Activated CD4-positive, alpha-beta memory T cell treated with anti-CD3 and anti-CD28 coated beads for 36 hours (primary cell): ENCODE measurements at regions of chr10 and their contacts with region 1.

Region 1: DNA sequence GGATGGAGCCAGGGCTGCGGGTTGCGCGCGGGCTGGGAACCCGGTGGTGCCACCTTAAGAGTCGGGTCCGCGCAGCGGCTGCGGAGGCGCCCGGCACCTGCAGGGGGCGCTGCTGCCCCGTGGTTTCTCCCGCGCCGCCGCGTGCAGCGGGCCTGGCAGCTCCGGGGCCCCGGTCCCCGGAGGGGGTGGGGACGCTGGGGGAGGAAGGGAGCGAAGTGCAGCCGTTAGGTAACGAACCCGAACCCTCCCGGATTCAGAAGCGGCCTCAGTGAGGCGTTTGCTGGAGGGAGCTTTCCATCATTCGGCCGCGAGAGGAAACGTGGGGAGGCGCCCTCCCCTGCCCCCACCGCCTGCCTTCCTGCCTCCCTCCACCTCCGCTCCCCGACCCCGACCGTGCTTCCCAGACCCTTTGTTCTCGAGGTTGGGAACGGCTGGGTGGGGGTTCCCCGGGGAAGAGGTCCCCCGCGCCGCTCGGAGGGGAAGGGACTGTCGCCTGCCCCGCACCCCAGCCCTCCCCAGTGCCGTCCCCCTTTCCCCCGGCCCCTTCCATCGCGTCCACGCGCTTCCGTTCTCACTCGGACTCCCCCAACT is 29.6 kb downstream of the SKIDA1 start:
- DNase-seq: peak; percentile 90
- H3K4me3 Mint-ChIP-seq: peak overlapping the region; percentile 71
- H3K27ac Mint-ChIP-seq: no peak overlapping the region
- H3K4me1 Mint-ChIP-seq: peaks cover 12% of the 10 kb centered on the region
- H3K27me3 Mint-ChIP-seq: peaks cover 48% of the 10 kb centered on the region

Region 2: DNA sequence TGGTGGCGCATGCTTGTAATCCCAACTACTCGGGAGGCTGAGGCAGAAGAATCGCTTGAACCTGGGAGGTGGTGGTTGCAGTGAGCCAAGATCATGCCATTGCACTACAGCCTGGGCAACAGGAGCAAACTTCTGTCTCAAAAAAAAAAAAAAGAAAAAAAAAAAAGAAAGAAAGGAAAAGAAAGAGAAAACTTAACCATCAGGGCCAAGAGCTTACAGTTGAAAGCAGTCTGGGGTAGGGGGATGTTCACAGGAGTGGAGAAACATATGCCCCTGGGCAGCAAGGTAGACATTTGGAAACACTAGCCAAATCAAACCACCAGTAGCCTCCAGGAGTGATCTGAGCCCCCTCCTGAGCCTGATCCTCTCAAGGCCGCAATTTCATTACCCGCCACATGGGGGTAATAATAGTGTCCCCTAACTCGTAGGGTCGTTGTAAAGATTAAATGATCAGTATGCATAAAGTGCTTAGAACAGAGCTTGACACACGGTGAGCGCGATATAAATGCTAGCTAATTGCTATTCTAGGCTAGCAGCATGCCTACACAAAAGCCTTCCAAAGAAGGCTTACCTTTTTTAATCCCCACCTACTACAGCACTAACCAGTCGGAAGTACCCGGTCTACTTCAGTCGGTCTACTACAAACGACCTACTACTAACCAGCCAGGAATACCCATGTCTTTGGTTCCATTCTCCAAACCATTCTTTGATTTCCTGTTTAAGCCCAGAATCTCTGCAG is 324.5 kb before region 1 on chr10:
- CTCF ChIA-PET with region 1: no interaction called
- POLR2A ChIA-PET with region 1: no interaction called
- intact Hi-C with region 1: no loop called
- DNase-seq: no peak
- H3K4me3 Mint-ChIP-seq: no peak overlapping the region
- H3K27ac Mint-ChIP-seq: no peak overlapping the region
- H3K4me1 Mint-ChIP-seq: peaks cover 2% of the 10 kb centered on the region
- H3K27me3 Mint-ChIP-seq: peaks cover 31% of the 10 kb centered on the region

Region 3: DNA sequence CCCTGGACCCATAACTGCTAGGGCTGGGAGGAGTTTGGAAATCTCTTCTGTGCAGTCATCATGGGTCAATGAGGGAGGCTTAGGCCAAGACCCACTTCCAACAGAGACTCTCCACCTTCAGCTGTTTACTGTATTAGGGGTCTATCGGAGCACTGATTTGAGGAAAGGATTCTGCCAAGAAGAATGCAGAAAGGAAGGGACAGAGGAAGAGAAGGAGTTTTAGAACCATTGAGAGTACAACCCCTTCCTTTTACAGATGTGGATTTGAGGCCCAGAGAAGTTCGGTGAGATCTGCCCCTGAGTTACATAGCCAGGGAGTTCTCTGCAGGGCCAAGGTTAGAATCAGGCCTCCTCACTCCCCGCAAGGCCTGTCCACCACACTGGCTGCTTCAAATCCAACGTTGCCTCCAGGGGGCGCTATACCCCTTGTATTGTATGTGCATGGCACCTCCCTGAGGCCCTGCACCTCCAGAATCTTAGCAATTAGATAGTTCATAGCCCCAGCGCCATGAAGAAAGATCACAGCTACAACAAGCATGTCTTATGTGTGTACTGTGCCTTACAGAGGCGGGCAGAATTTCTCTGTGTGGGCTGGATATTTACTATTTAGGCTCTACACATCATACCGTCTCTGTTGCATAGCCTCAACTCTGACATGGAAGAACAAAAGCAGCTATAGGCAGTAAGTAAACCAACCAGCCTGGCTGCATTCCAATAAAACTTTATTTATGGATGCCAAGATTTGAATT is 217.2 kb before region 1 on chr10:
- CTCF ChIA-PET with region 1: interaction called, 3 read pairs
- POLR2A ChIA-PET with region 1: interaction called, 3 read pairs
- intact Hi-C with region 1: loop called (anchors 1 kb)
- DNase-seq: peak; percentile 85
- H3K4me3 Mint-ChIP-seq: no peak overlapping the region
- H3K27ac Mint-ChIP-seq: no peak overlapping the region
- H3K4me1 Mint-ChIP-seq: no peaks in the 10 kb centered on the region
- H3K27me3 Mint-ChIP-seq: peaks cover 6% of the 10 kb centered on the region

Region 4: DNA sequence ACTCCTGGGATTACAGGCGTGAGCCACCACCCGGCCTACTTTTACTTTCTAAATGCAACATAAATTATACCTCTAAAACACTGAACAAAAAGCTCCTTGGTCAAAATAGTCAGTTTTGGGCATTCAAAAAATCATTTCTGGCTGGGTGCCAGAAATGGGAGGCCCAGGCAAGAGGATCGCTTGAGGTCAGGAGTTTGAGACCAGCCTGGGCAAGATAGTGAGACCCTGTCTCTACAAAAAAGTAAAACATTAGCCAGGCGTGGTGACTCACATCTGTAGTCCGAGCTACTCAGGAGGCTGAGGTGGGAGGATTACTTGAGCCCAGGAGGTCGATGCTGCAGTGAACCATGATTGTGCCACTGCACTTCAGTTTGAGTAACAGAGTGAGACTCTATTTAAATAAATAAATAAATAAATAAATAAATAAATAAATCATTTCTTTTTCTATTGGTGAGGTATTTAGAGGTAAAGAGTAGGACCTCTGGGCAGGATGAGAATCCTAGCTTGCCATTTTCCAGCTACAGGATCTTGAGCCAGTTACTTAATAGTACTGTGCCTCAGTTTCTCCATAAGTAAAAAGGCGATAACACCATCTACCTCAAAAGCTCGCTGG is 58.0 kb before region 1 on chr10:
- CTCF ChIA-PET with region 1: no interaction called
- POLR2A ChIA-PET with region 1: no interaction called
- intact Hi-C with region 1: no loop called
- DNase-seq: no peak
- H3K4me3 Mint-ChIP-seq: no peak overlapping the region
- H3K27ac Mint-ChIP-seq: no peak overlapping the region
- H3K4me1 Mint-ChIP-seq: no peaks in the 10 kb centered on the region
- H3K27me3 Mint-ChIP-seq: peaks cover 5% of the 10 kb centered on the region

Region 5: GRCh38 chr10:21525367-21526183 is 29.7 kb after region 1 on chr10 and contains the start of gene SKIDA1:
- CTCF ChIA-PET with region 1: interaction called, 10 read pairs
- POLR2A ChIA-PET with region 1: interaction called, 7 read pairs
- intact Hi-C with region 1: no loop called
- DNase-seq: peak; percentile 79
- H3K4me3 Mint-ChIP-seq: peak within 1 kb of the TSS; percentile 80
- H3K27ac Mint-ChIP-seq: peak within 1 kb of the TSS; percentile 90
- H3K4me1 Mint-ChIP-seq: peaks cover 30% of the 10 kb centered on the region
- H3K27me3 Mint-ChIP-seq: peaks cover 13% of the 10 kb centered on the region
- total RNA-seq, gene SKIDA1: 0.07 to 0.21 TPM

Region 6: DNA sequence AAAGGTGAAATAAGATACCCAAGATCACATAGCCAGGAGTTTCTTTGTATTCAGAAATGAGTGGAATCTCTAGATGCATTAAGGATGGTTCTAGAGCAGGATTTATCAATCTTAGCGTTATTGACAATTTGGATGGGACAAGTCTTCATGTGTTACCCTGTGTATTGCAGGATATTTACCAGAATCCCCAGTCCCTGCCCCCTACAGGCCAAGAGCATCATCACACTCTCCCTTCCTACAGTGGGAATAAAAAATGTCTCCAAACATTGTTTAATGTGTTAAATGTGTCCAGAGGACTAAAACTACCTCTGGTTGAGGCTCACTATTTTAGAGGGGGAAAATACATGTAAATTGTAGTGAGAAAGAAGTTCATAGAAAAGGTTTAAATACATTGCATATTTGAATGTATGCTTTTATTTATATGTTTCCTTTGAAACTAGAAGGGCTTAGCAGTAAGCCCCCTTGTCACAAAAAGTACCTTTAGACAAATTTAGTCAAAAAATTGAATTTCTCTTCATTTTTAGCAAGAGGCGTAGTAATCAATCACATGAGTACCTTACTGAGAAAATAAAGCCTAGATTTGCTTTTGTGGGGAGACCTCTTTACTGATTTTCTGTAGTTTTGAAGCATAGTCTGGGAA is 179.4 kb after region 1 on chr10:
- CTCF ChIA-PET with region 1: no interaction called
- POLR2A ChIA-PET with region 1: no interaction called
- intact Hi-C with region 1: loop called (anchors 5 kb)
- DNase-seq: peak; percentile 36
- H3K4me3 Mint-ChIP-seq: no peak overlapping the region
- H3K27ac Mint-ChIP-seq: no peak overlapping the region
- H3K4me1 Mint-ChIP-seq: peaks cover 4% of the 10 kb centered on the region
- H3K27me3 Mint-ChIP-seq: no peaks in the 10 kb centered on the region

Region 7: DNA sequence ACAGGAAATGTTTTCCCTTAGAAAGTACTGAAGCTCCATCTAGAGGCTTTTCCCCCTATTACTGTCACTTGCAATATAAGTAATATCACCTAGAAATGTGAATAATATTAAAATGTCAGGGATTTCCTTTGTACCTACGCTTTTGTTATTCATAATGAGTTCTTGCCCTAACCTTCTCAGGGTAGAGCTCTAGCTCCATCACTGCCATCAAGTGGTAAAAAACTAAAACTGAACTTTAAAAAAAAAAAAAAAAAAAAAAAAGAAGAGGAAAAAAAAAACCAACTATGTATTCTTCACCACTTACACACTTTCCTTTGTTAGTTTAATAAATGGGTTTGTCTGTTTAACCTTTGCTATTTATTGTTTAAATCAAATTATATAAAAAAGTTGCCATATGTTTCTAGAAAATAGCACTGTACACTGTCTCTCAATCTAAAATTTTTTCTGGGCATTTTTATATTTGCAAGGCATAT is 457.8 kb after region 1 on chr10:
- CTCF ChIA-PET with region 1: interaction called, 3 read pairs
- POLR2A ChIA-PET with region 1: no interaction called
- intact Hi-C with region 1: loop called (anchors 1 kb)
- DNase-seq: no peak
- H3K4me3 Mint-ChIP-seq: no peak overlapping the region
- H3K27ac Mint-ChIP-seq: no peak overlapping the region
- H3K4me1 Mint-ChIP-seq: peaks cover 2% of the 10 kb centered on the region
- H3K27me3 Mint-ChIP-seq: no peaks in the 10 kb centered on the region

Region 8: DNA sequence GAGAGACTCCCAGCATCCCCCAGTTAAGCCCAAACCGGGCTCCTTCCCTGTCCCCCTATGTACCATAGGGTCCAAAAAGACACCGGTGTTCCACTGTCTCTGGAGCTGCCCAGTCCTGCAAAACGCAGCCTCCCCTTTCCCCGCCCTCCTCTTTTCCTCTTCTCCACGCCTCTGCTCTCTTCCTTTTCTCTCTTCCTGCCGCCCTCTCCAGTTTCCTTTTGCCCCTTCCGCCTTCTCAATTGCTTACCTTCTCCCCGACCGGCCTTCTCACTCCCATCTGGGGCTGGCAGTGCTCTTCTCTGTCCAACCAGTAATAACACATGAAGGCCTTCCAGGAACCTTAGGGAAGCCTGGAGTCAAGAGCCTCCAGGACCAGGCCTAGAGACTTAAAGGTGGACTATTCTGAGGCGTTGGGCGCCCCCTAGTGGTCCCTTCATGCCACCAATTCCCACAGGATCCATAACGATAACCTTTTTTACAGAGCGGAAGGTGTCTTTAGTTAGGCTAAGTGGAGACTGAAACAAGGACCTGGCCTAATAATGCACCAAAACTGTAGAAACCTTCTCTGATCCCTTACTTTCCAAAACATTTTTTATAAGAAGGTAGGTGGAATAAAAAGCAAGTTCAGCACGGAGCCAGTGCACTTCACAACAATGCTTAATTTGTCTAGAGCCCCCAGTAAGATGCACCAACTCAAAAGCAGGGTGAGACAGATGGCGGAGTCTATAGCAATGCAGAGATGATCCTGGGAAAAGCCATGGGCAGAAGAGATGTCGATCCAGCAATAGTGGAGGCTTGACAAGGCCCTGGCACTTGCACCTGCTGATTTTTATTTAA is 1572.3 kb after region 1 on chr10:
- CTCF ChIA-PET with region 1: no interaction called
- POLR2A ChIA-PET with region 1: no interaction called
- intact Hi-C with region 1: loop called (anchors 10 kb)
- DNase-seq: peak; percentile 76
- H3K4me3 Mint-ChIP-seq: no peak overlapping the region
- H3K27ac Mint-ChIP-seq: no peak overlapping the region
- H3K4me1 Mint-ChIP-seq: no peaks in the 10 kb centered on the region
- H3K27me3 Mint-ChIP-seq: peaks cover 1% of the 10 kb centered on the region